ENCODE measurements at regions of chr3 and their contacts with region 1.

Region 1: DNA sequence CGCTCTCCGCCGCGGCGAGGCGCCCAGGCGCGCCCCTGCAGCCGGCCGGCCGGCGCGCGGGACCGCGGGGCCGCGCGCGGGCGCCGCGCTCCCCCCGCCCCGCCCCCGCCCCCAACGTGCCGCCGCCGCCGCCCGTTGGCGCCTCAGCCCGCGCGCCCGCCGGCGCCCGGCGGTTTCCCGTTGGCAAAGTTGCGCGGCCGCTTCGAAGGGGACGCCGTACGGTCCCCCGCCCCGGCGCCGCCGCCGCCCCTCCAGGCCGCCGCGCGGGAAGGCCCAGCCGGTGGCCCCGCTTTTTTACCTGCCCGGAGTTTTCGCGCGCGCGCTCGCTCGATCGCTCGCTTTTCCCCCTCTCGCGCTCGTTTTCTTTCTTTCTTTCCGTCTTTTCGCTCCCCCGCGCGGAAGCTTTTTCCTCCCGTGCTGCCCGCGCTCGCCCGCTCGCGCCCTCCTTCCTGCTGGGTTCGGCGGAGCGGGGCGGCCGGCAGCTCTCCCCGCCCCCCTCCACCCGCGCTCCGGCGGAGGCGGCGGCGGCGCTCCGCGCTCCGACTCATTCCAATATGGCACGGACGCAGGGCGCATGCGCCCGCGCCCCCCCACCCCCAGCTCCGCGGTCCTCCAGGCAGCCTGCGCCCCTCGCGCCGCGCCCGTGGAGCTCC is at the start of gene SFMBT1:
- DNase-seq: peak; percentile 79
- ATAC-seq: peak; percentile 66
- H3K4me3 Mint-ChIP-seq: peak within 1 kb of the TSS; percentile 86
- H3K27ac Mint-ChIP-seq: peak within 1 kb of the TSS; percentile 92
- H3K4me1 Mint-ChIP-seq: peaks cover 33% of the 10 kb centered on the region
- H3K27me3 Mint-ChIP-seq: peaks cover 11% of the 10 kb centered on the region
- total RNA-seq, gene SFMBT1: 25.9 to 29.7 TPM

Region 2: DNA sequence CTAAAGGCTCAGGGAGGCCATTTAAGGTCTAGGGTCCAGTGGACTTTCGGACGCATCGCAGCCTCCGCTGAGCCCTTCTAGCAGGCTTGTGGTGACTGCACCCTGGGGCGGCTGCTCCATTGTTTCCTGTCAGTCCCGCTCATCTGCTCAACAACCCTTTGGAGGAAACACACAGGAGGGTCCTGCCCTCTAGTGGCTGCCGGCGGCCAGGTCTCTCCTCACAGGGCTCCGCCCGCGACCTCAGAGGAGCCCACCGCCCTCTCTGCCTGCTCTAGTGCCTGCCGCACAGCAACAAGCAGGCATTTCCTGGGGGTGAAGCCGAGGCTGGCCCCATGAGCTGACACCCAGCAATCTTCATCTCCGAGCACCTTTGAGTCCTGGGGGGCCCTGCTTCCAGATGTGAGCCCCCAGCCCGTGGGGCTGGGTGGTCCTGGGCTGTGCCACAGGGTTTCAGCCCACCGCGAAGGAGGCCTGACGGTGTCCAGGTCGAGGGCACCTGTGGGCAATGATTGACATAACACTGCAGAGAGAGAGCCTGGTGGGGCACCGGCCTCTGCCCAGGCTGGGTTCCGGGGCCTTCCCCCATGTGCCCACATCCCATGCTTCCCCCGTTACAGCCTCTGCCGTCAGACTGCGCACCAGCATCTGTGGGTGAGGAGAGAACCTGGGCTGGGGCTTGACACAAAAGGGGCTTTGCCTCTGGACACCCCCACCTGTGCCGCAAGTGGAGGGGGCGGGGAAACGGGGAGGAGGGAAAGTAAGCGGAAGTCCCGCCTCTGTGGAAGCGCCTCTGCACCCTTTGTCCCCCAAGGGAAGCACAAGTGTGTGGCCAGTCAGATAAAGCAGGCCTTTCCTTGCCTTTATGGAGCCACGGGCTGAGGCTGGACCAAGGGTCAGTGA is 27.3 kb after region 1 on chr3:
- CTCF ChIA-PET with region 1: interaction called, 16 read pairs
- DNase-seq: peak; percentile 94
- ATAC-seq: peak; percentile 95
- H3K4me3 Mint-ChIP-seq: peak overlapping the region; percentile 84
- H3K27ac Mint-ChIP-seq: peak overlapping the region; percentile 97
- H3K4me1 Mint-ChIP-seq: peaks cover 15% of the 10 kb centered on the region
- H3K27me3 Mint-ChIP-seq: no peaks in the 10 kb centered on the region